Ascending aorta (tissue), 2 donors: ENCODE measurements at regions of chr1 and their contacts with region 1.

Region 1: GRCh38 chr1:2194898-2195673 is 514 bp upstream of the FAAP20 start:
- DNase-seq: peak; percentile 70 to 95
- H3K4me3 ChIP-seq: peak overlapping the region; percentile 58 to 85
- H3K27ac ChIP-seq: peak overlapping the region; percentile 94 to 97
- H3K4me1 ChIP-seq: peaks cover 31 to 57% of the 10 kb centered on the region in 2 donors
- H3K27me3 ChIP-seq: no peaks in the 10 kb centered on the region
- CTCF ChIP-seq: peak; percentile 97 to 100 (median 98)

Region 2: GRCh38 chr1:2233997-2234761 is 39.1 kb after region 1 on chr1:
- intact Hi-C with region 1: loop called (anchors 2 kb)
- DNase-seq: peak; percentile 82 to 97
- H3K4me3 ChIP-seq: peak overlapping the region; percentile 78 to 85
- H3K27ac ChIP-seq: peak overlapping the region; percentile 85 to 93
- H3K4me1 ChIP-seq: peaks cover 55 to 66% of the 10 kb centered on the region in 2 donors
- H3K27me3 ChIP-seq: no peaks in the 10 kb centered on the region
- CTCF ChIP-seq: no peak

Region 3: DNA sequence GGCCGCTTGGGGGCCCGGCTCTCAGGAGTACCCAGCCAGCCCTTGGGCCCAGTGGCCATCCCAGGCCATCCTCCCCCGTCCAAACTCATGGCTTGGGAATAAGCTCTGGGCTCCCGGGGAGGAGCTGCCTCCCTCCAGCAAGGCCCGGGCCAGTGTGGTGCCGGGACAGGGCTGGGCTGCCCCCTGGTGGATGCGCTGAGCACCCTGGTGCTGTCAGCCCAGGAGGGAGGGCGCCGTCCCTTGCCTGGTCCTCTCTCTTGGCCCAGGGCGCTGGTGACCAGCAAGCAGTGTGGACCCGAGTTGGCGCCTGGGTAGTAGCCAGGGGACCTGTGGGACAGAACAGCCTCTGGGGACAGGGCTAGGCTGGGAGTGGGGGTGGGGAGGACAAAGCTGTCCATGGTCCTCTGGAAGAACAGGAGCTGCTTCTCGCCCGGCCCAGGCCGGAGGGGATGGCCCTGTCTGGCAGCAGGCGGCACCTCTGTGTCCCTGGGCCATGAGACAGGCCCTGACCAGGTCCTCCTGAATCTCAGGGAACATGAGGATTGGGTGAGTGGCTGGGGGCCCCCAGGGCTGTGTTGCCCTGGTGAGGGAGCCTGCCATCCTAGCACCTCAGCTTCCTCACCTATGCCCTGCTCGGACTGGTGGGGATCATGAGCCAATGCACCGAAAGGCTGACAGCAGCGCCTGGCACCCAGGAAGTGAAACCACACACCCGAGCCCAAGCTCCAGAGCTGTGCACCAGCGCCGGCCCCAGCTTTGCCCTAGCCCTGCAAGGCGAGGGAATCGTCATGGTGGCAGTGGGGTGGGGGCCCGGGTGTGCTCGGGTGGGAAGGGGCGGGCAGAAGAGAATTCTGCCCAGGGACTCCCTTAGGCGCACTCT is 186.9 kb after region 1 on chr1:
- intact Hi-C with region 1: loop called (anchors 1 kb)
- DNase-seq: peak; percentile 29 to 91
- H3K4me3 ChIP-seq: no peak overlapping the region
- H3K27ac ChIP-seq: peak overlapping the region; percentile 32 to 51
- H3K4me1 ChIP-seq: peaks cover 10 to 11% of the 10 kb centered on the region in 2 donors
- H3K27me3 ChIP-seq: no peaks in the 10 kb centered on the region
- CTCF ChIP-seq: peak; percentile 96 to 99 (median 99)

Region 4: GRCh38 chr1:2525920-2526823 is 331.1 kb after region 1 on chr1 and contains the start of gene PANK4:
- intact Hi-C with region 1: loop called (anchors 5 kb)
- DNase-seq: peak; percentile 68 to 96
- H3K4me3 ChIP-seq: peak within 1 kb of the TSS; percentile 75 to 80
- H3K27ac ChIP-seq: peak within 1 kb of the TSS; percentile 66 to 68
- H3K4me1 ChIP-seq: peaks cover 36 to 54% of the 10 kb centered on the region in 2 donors
- H3K27me3 ChIP-seq: no peaks in the 10 kb centered on the region
- CTCF ChIP-seq: no peak
- total RNA-seq, gene PANK4: 80.5 TPM

Region 5: GRCh38 chr1:2586154-2587070 is 391.3 kb after region 1 on chr1 and contains the start of gene PRXL2B:
- intact Hi-C with region 1: loop called (anchors 5 kb)
- DNase-seq: peak; percentile 95 to 99
- H3K4me3 ChIP-seq: peak within 1 kb of the TSS; percentile 79 to 85
- H3K27ac ChIP-seq: peak within 1 kb of the TSS; percentile 91 to 94
- H3K4me1 ChIP-seq: peaks cover 13 to 14% of the 10 kb centered on the region in 2 donors
- H3K27me3 ChIP-seq: no peaks in the 10 kb centered on the region
- CTCF ChIP-seq: no peak
- total RNA-seq, gene PRXL2B: 20.1 TPM